HepG2 (cell line): ENCODE measurements at regions of chr11 and their contacts with region 1.

Region 1: DNA sequence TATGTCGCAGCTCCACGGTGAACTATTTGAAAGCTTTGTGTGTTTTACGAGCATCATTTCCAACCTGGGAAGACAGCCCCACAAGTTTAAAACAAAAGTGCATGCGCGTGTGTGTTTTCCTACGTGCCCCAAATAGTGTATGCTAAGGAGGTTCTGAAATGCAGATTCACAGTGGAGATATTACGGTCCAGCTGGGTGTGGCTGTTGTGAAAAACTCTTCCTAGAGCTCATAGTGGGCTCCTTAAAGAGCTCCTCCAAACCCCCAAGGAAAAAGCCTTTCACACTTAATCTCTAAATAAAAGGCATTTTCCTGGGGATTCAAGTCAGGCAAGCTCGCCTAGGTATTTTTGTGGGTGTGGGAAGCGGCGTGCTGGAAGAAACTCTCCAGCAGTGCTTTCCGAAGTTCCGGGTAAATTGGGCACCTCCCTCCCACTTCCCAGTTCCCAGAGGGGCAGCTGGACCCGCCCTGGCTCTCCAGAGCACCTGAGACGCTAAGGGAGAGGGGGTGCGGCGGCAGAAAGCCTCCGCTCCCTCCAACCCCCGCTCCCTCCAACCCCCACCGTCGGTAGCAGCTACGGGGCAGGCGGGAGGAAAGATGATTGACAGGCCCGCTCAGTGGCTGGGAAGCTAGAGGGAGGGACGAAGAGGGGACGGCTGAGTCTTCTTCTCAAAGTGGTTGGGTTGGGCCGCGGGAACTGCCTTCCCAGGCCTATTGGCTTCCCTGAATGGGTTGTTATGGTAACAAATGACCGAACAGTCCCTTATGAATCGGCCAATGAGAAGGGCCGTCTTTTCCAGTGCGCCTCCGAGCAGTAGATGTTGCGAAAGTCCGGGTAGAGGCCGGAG is 558 bp upstream of the PCF11 start:
- DNase-seq: peak; percentile 100
- ATAC-seq: peak; percentile 96
- H3K4me3 ChIP-seq: peak overlapping the region; percentile 62 to 75 (median 66)
- H3K27ac ChIP-seq: peak overlapping the region; percentile 73
- H3K4me1 ChIP-seq: peaks cover 29% of the 10 kb centered on the region
- H3K27me3 ChIP-seq: no peaks in the 10 kb centered on the region; a peak in 2 of 5 replicates
- CTCF ChIP-seq: no peak
- EP300 ChIP-seq: 0 out of 4 replicates have a peak, but pooled peaks of 1 of the 2 experiments have one; percentile 13
- POLR2A ChIP-seq: peak in 1 of 2 experiments; percentile 64; a peak in 2 of 4 replicates
- RAD21 ChIP-seq: no peak

Region 2: DNA sequence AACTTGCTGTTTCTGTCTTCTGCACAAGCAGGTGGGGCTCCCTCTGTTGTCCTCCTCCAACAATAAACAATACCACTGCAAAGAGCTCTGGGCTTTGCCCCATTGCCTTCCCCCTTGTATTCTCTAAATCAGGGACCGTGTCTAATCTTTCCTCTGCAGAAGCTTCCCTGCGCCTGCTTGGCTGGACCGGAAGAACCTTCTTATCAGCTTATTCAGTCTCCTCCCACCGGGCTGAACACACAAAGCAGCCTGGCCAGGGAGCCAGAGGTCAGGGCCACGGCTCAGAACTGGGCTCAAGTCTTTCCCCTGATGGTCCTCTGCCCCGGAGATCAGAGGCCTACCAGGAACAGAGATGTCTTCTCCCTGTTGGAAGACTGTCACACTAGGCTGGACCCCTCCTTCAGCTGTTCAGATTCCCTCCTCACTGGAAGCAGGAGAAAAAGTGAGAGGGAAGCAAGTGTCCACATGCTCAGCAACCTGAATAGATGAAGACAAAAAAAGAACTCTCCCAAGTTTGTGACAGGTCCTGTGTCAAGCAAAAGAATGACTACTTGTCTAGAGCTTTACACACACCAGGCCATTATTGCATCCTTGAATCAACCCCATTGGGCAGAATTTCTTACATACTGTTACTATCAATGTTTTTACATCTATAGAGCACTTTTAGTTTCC is 148.3 kb before region 1 on chr11:
- CTCF ChIA-PET with region 1: no interaction called
- POLR2A ChIA-PET with region 1: interaction called, 25 read pairs
- in situ Hi-C with region 1: no loop called
- intact Hi-C with region 1: loop called (anchors 5 kb)
- DNase-seq: peak; percentile 88
- ATAC-seq: peak; percentile 96
- H3K4me3 ChIP-seq: peak overlapping the region; percentile 16 to 40 (median 40)
- H3K27ac ChIP-seq: peak overlapping the region; percentile 72
- H3K4me1 ChIP-seq: peaks cover 71% of the 10 kb centered on the region
- H3K27me3 ChIP-seq: no peaks in the 10 kb centered on the region
- CTCF ChIP-seq: peak; percentile 42
- EP300 ChIP-seq: peak in 1 of 2 experiments; percentile 93; a peak in 2 of 4 replicates
- POLR2A ChIP-seq: no peak
- RAD21 ChIP-seq: peak; percentile 15; the same call in 1 of the 2 replicates

Region 3: GRCh38 chr11:83087035-83087434 is 69.3 kb before region 1 on chr11:
- CTCF ChIA-PET with region 1: no interaction called
- POLR2A ChIA-PET with region 1: interaction called, 37 read pairs
- in situ Hi-C with region 1: loop called (anchors 5 kb)
- intact Hi-C with region 1: loop called (anchors 2 kb)
- DNase-seq: peak; percentile 39
- ATAC-seq: peak; percentile 43; the same call in 2 of the 3 replicates
- H3K4me3 ChIP-seq: no peak overlapping the region
- H3K27ac ChIP-seq: no peak overlapping the region
- H3K4me1 ChIP-seq: peaks cover 20% of the 10 kb centered on the region
- H3K27me3 ChIP-seq: no peaks in the 10 kb centered on the region
- CTCF ChIP-seq: peak; percentile 31; the same call in 1 of the 2 replicates
- EP300 ChIP-seq: no peak
- POLR2A ChIP-seq: no peak
- RAD21 ChIP-seq: 0 out of 2 replicates have a peak, but pooled peaks have one; percentile 45

Region 4: GRCh38 chr11:83102834-83103233 is 53.5 kb before region 1 on chr11:
- CTCF ChIA-PET with region 1: no interaction called
- POLR2A ChIA-PET with region 1: interaction called, 11 read pairs
- in situ Hi-C with region 1: no loop called
- intact Hi-C with region 1: no loop called
- DNase-seq: peak; percentile 64
- ATAC-seq: peak; percentile 51; the same call in 2 of the 3 replicates
- H3K4me3 ChIP-seq: no peak overlapping the region
- H3K27ac ChIP-seq: no peak overlapping the region
- H3K4me1 ChIP-seq: peaks cover 22% of the 10 kb centered on the region
- H3K27me3 ChIP-seq: no peaks in the 10 kb centered on the region
- CTCF ChIP-seq: no peak
- EP300 ChIP-seq: no peak
- POLR2A ChIP-seq: no peak
- RAD21 ChIP-seq: no peak

Region 5: DNA sequence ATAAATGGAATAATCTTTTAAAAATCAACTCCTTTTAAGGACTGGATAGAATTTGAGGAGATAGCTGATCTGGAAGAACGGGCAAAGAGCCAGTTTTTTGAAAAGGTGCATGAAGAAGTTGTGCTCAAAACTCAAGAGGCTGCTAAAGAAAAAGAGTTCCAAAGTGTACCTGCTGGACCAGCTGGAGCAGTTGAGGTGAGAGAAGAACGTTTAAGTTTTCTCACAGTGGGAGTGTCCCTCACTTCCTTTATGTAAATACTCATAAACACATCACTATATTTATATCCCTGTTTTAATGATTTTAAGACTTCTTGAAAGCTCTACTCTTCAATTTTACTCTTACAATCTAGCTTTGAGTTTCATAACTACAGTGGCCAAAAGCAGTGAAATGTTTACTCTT is 25.4 kb after region 1 on chr11:
- CTCF ChIA-PET with region 1: no interaction called
- POLR2A ChIA-PET with region 1: interaction called, 10 read pairs
- in situ Hi-C with region 1: no loop called
- intact Hi-C with region 1: no loop called
- DNase-seq: no peak
- ATAC-seq: no peak
- H3K4me3 ChIP-seq: no peak overlapping the region
- H3K27ac ChIP-seq: no peak overlapping the region
- H3K4me1 ChIP-seq: no peaks in the 10 kb centered on the region
- H3K27me3 ChIP-seq: no peaks in the 10 kb centered on the region
- CTCF ChIP-seq: no peak
- EP300 ChIP-seq: no peak
- POLR2A ChIP-seq: no peak
- RAD21 ChIP-seq: no peak

Region 6: DNA sequence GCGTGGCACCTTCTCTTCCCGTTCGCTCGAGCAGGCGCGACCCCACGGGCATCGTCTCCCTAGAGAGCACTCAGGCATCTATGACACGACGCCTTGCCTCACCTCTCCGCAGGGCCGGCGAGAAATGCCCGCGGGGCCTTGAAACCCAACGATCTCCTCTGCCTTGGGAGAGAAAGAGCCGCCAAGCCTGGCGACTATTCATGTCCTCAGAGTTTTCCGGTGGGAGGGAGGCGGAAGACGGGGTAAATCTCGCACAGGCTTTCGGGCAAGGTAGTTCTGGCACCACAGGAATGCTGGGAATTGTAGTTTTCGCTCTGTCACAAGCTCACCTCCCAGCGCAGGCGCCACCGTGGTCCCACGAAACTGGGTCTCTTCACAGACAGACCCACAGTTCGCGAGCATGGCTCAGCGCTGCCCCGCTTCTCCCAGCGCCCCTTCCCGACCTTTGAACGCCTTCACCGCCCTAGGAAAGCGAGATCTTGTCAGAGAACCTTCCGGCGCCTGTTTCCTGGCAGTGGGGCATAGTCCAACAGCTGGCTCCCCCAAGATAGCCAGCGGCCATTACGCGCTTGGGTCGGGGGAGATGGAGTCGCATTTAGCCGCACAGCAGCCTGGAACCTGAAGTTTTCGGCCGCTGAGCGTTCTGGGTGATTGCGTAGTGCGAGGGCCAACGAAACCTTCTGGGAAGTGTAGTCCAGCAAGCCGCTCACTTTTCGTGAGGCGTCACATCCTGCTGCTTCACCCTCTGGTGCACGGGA is 129.6 kb after region 1 on chr11 and contains the start of gene CCDC90B:
- CTCF ChIA-PET with region 1: no interaction called
- POLR2A ChIA-PET with region 1: interaction called, 28 read pairs
- in situ Hi-C with region 1: no loop called
- intact Hi-C with region 1: no loop called
- DNase-seq: peak; percentile 95
- ATAC-seq: peak; percentile 94
- H3K4me3 ChIP-seq: peak within 1 kb of the TSS; percentile 68 to 91 (median 75)
- H3K27ac ChIP-seq: peak within 1 kb of the TSS; percentile 96
- H3K4me1 ChIP-seq: peaks cover 34% of the 10 kb centered on the region
- H3K27me3 ChIP-seq: no peaks in the 10 kb centered on the region
- CTCF ChIP-seq: peak; percentile 81
- EP300 ChIP-seq: peak in 1 of 2 experiments; percentile 15; a peak in 1 of 4 replicates
- POLR2A ChIP-seq: peak; percentile 75 to 98
- RAD21 ChIP-seq: no peak; the same call in 1 of the 2 replicates
- total RNA-seq, gene CCDC90B: 46.1 and 56.3 TPM in 2 replicates

Region 7: GRCh38 chr11:83724008-83724461 is 567.7 kb after region 1 on chr11:
- CTCF ChIA-PET with region 1: no interaction called
- POLR2A ChIA-PET with region 1: no interaction called
- in situ Hi-C with region 1: no loop called
- intact Hi-C with region 1: no loop called
- DNase-seq: peak; percentile 51
- ATAC-seq: peak; percentile 88
- H3K4me3 ChIP-seq: peak overlapping the region; percentile 4 to 35 (median 25); a peak in 1 of 6 replicates
- H3K27ac ChIP-seq: no peak overlapping the region
- H3K4me1 ChIP-seq: peaks cover 14% of the 10 kb centered on the region
- H3K27me3 ChIP-seq: 0 out of 5 replicates have a peak, but pooled peaks cover 0 to 3% of the 10 kb centered on the region in 2 experiments
- CTCF ChIP-seq: peak; percentile 66
- EP300 ChIP-seq: no peak
- POLR2A ChIP-seq: no peak
- RAD21 ChIP-seq: 0 out of 2 replicates have a peak, but pooled peaks have one; percentile 18